Activated naive CD4-positive, alpha-beta T cell treated with anti-CD3 and anti-CD28 coated beads for 36 hours (primary cell): ENCODE measurements at regions of chr10 and their contacts with region 1.

Region 1: DNA sequence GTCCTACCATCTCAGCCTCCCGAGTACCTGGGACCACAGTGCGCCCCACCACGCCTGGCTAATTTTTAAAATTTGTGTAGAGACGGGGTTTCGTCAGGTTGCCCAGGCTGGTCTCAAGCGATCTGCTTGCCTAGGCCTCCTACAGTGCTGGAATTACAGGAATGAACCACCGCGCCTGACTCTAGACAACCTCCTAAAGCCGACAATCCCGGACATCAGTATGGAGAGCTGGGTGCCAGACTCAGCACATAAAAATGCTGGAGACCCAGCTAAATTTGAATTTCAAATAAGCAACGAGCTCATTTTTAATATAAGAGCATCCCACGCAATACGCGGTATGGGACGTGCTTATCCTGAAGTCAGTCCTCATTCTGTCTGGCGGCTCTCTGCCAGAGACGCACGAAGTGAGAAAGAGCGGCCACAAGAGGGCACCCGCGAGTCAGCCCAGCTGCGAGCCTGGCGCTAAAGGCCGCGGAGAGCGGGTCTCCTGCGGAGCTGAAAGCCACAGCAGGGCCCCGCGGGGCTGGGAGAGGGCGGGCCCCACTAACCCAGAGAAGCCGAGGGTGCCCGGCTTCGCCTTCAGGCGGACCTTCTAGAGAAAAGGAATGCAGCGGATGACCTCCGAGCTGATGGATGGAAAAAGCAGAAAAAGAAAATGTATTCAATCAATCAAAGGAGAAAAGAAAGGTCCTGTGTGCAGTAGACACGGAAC is 7.0 kb downstream of the CALY start:
- DNase-seq: peak; percentile 90
- H3K4me3 Mint-ChIP-seq: peak overlapping the region; percentile 24
- H3K27ac Mint-ChIP-seq: no peak overlapping the region
- H3K4me1 Mint-ChIP-seq: peaks cover 14% of the 10 kb centered on the region
- H3K27me3 Mint-ChIP-seq: peaks cover 42% of the 10 kb centered on the region

Region 2: DNA sequence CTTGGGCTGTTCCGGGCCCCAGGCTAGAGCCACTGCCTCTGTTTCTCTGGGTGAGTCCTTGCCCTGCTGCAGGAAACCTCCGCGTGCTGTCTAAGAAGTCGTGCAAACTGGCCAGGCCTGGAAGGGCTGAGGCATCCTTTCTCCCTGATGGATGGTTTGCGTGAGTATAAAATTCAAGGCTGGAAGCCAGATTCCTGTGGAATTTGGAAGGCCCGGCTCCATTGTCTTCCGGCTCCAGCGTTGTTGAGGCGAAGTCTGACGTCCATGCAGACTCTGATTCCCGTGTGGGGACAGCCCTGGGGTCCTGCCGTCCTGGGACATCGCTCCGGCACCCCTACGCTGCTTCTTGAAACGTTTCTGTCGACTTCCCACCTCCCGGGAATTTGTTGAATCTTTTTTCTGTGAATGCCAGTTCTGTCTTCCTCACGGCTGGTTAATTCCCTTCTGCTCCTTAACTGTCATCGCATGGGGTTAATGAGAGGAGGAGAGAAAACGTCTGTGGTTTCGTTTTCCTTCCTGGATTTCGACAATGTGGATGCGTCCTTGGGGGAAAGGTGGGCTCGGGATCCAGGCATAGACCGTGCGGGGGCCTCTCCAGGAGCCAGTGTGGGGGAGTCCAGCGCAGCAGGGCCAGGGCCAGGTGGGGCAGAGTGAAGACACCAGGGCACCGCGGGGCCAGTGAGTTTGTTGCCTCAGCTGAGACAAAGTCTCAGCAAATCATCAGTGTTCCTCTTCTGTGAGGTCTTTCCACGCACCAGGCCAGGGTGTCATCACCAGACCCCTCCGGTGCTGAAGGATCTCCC is 353.9 kb before region 1 on chr10:
- CTCF ChIA-PET with region 1: no interaction called
- intact Hi-C with region 1: no loop called
- DNase-seq: peak; percentile 1
- H3K4me3 Mint-ChIP-seq: no peak overlapping the region
- H3K27ac Mint-ChIP-seq: no peak overlapping the region
- H3K4me1 Mint-ChIP-seq: no peaks in the 10 kb centered on the region
- H3K27me3 Mint-ChIP-seq: peaks cover 12% of the 10 kb centered on the region

Region 3: DNA sequence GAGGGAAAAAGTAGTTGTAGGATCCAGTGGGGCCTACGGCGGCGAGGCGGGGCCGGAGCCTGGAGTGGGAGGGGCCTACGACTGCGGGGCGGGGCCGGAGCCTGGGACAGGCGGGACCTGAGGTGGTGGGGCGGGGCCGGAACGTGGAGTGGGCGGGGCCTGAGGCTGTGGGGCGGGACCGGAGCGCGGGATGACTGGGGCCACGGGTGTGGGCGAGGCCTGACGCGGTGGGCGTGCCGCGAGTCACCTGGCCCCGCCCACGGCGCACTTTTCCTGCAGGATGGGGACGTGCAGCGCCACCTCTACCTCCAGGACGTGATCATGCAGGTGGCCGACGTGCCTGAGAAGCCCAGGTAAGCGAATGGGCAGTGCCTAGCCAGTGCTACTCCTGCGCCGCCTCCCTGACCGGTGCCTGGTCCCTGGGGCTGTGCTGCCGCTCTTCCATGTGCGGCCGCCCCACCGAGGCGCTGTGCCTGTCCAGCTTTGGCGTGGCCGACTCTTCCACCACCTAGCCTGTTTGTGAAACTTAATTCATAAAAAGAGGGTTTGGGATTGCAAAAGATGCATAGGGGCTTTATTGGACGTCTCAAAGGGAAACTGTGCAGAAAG is 20.4 kb before region 1 on chr10:
- CTCF ChIA-PET with region 1: interaction called, 12 read pairs
- intact Hi-C with region 1: no loop called
- DNase-seq: peak; percentile 95
- H3K4me3 Mint-ChIP-seq: peak overlapping the region; percentile 65
- H3K27ac Mint-ChIP-seq: peak overlapping the region; percentile 71
- H3K4me1 Mint-ChIP-seq: peaks cover 23% of the 10 kb centered on the region
- H3K27me3 Mint-ChIP-seq: no peaks in the 10 kb centered on the region

Region 4: DNA sequence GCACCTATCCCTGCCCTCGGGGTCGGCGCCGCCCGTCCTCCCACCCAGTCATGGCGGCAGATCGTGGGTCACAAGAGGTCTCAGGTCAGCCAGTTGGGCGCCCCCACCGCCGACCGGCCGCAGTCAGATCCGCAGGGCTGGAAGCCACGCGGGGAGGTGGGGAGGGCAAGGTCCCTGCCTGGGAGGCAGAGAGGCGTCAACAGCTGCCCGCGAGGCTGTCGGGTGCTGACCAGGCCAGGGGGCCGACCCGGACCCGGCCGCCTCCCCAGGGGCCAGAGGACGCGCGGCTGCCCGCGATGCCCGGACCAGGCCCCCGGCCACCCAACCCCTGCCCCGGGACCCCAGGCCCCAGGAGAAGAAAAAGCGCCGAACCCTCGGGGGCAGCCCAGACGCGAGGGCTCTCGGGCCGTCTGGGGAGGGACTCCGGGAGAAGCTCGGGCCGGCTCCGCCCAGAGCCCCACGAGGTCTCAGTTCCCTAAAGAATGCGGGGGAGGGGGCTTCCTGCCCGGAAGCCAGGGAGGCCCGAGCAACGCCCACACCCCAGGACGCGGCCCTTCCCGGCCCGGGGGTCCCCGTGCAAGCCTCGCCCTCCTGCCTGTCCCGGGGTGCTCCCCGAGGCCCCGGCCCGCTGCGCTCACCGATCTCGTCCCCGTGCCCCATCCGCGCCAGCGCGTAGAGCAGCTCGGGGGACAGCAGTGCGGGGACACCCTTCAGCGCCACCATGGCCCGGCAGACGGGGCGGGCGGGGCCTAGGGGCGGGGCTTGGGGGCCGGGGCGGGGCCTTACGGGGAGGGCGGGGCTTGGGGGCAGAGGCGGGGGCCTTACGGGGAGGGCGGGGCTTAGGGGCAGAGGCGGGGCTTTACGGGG is 27.9 kb after region 1 on chr10 and contains the start of gene FUOM:
- CTCF ChIA-PET with region 1: interaction called, 13 read pairs
- intact Hi-C with region 1: no loop called
- DNase-seq: peak; percentile 75
- H3K4me3 Mint-ChIP-seq: peak within 1 kb of the TSS; percentile 77
- H3K27ac Mint-ChIP-seq: no peak within 1 kb of the TSS
- H3K4me1 Mint-ChIP-seq: peaks cover 3% of the 10 kb centered on the region
- H3K27me3 Mint-ChIP-seq: no peaks in the 10 kb centered on the region
- total RNA-seq, gene FUOM: 29.9 to 34.9 TPM

Region 5: GRCh38 chr10:133438711-133439273 is 109.1 kb after region 1 on chr10:
- CTCF ChIA-PET with region 1: interaction called, 16 read pairs
- intact Hi-C with region 1: loop called (anchors 1 kb)
- DNase-seq: no peak
- H3K4me3 Mint-ChIP-seq: no peak overlapping the region
- H3K27ac Mint-ChIP-seq: no peak overlapping the region
- H3K4me1 Mint-ChIP-seq: peaks cover 7% of the 10 kb centered on the region
- H3K27me3 Mint-ChIP-seq: peaks cover 6% of the 10 kb centered on the region

Region 6: GRCh38 chr10:133509700-133510099 is 180.1 kb after region 1 on chr10:
- CTCF ChIA-PET with region 1: no interaction called
- intact Hi-C with region 1: no loop called
- DNase-seq: no peak
- H3K4me3 Mint-ChIP-seq: no peak overlapping the region
- H3K27ac Mint-ChIP-seq: no peak overlapping the region
- H3K4me1 Mint-ChIP-seq: no peaks in the 10 kb centered on the region
- H3K27me3 Mint-ChIP-seq: peaks cover 2% of the 10 kb centered on the region

Region 7: GRCh38 chr10:133608855-133609254 is 279.2 kb after region 1 on chr10:
- CTCF ChIA-PET with region 1: interaction called, 3 read pairs
- intact Hi-C with region 1: loop called (anchors 1 kb)
- DNase-seq: no peak
- H3K4me3 Mint-ChIP-seq: no peak overlapping the region
- H3K27ac Mint-ChIP-seq: no peak overlapping the region
- H3K4me1 Mint-ChIP-seq: no peaks in the 10 kb centered on the region
- H3K27me3 Mint-ChIP-seq: peaks cover 22% of the 10 kb centered on the region